ENCODE measurements at regions of chr19 and their contacts with region 1.

Region 1: GRCh38 chr19:41859618-41860418 is at the start of gene RPS19:
- DNase-seq: peak; percentile 95 to 99 (median 98)
- ATAC-seq: peak; percentile 85
- H3K4me3 ChIP-seq: peak within 1 kb of the TSS; percentile 74
- H3K4me3 Mint-ChIP-seq: peak within 1 kb of the TSS; percentile 87
- H3K27ac ChIP-seq: peak within 1 kb of the TSS; percentile 89 to 98
- H3K27ac Mint-ChIP-seq: peak within 1 kb of the TSS; percentile 86
- H3K4me1 ChIP-seq: peaks cover 49% of the 10 kb centered on the region
- H3K4me1 Mint-ChIP-seq: peaks cover 48% of the 10 kb centered on the region
- H3K27me3 ChIP-seq: no peaks in the 10 kb centered on the region
- H3K27me3 Mint-ChIP-seq: no peaks in the 10 kb centered on the region
- CTCF ChIP-seq: peak; percentile 84
- total RNA-seq, gene RPS19: 3,668 to 3,697 TPM

Region 2: GRCh38 chr19:41801792-41802211 is 58.0 kb before region 1 on chr19:
- CTCF ChIA-PET with region 1: no interaction called
- POLR2A ChIA-PET with region 1: no interaction called
- intact Hi-C with region 1: no loop called
- DNase-seq: peak in 2 of 14 experiments; percentile 36 to 43
- ATAC-seq: no peak
- H3K4me3 ChIP-seq: no peak overlapping the region
- H3K4me3 Mint-ChIP-seq: no peak overlapping the region
- H3K27ac ChIP-seq: no peak overlapping the region
- H3K27ac Mint-ChIP-seq: no peak overlapping the region
- H3K4me1 ChIP-seq: no peaks in the 10 kb centered on the region
- H3K4me1 Mint-ChIP-seq: peaks cover 16% of the 10 kb centered on the region
- H3K27me3 ChIP-seq: peaks cover 0 to 2% of the 10 kb centered on the region in 2 experiments
- H3K27me3 Mint-ChIP-seq: no peaks in the 10 kb centered on the region
- CTCF ChIP-seq: no peak

Region 3: DNA sequence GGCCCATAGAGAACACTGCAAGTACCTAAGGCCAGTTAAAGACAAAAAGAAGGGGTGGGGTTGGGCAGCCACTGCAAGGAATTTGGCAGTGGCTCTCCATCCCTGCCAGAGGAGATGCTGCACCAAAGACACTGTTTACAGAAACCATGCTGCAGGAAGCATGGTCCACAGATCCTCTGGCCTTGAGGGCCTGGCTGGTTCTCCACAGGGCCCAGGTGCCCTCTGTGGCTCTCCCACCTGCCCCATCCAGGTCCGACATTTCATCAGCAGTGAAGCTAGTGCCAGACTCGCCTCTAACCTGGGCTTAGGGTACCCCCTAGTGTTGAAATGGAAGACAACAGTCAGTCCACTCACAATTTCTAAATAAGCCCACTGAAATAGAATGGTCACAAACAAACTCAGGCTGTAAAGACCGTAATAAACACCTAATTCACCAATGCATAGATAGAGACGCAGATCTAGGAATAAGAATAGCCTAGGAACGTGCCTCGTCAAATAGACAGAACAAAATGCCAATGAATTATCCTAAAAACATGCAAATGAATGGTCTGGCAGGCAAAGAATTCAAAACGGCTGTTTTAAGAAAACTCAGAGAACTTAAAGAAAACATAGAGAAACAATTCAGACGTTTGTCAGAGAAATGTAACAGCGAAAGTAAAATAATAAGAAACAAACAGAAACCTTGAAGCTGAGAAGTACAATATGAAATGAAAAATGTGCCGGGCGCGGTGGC is 38.6 kb before region 1 on chr19:
- CTCF ChIA-PET with region 1: no interaction called
- POLR2A ChIA-PET with region 1: no interaction called
- intact Hi-C with region 1: no loop called
- DNase-seq: peak in 13 of 14 experiments; percentile 7 to 76 (median 21)
- ATAC-seq: peak; percentile 81
- H3K4me3 ChIP-seq: no peak overlapping the region
- H3K4me3 Mint-ChIP-seq: no peak overlapping the region
- H3K27ac ChIP-seq: no peak overlapping the region
- H3K27ac Mint-ChIP-seq: no peak overlapping the region
- H3K4me1 ChIP-seq: peaks cover 2% of the 10 kb centered on the region
- H3K4me1 Mint-ChIP-seq: no peaks in the 10 kb centered on the region
- H3K27me3 ChIP-seq: peaks cover 0 to 2% of the 10 kb centered on the region in 2 experiments
- H3K27me3 Mint-ChIP-seq: peaks cover 25% of the 10 kb centered on the region
- CTCF ChIP-seq: peak; percentile 66

Region 4: DNA sequence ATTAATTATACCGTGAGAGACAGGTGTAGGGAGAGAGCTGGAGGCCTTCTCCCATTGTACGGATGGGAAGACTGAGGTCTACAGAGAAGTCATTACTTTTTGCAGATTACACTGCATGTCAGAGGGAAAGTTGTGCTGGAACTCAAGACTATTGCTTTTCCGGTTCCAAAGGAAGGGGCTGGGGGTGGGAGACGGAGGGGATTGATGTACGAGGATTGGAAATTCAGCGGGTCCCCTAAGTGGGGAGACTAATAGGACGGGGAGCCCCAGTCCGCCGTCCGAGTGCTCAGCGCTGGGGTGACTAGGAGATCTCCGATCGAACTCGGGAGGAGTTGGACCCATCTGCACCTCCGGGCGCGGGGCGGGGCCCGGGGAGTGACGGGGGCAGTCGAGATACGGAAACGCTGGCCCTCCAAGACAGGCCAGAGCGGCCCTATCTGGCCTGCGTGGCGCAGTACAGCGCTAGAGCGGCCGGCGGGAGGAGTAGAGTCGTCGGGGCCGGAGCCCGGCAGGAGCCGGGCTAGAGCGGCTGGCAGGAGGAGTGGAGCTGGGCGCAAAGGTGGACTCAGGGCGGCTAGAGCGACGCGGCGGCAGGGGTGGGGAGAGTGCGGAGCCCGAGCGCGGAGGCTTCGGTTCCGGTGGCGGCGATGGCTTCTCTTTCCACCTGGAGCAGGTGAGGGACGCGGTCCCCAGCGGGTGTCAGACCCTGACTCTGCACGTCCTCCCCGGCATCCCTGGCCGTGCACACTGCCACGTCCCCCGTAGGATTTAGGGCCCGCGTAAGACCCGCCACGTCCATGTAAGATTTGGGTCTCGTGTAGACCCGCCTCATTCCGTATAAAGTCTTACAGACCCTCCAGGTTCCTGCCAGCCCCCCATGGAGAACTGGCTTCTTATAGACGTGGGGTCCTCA is 24.3 kb after region 1 on chr19:
- CTCF ChIA-PET with region 1: interaction called, 59 read pairs
- POLR2A ChIA-PET with region 1: interaction called, 184 read pairs
- intact Hi-C with region 1: loop called (anchors 1 kb)
- DNase-seq: peak; percentile 68 to 94 (median 87)
- ATAC-seq: peak; percentile 37
- H3K4me3 ChIP-seq: peak overlapping the region; percentile 94
- H3K4me3 Mint-ChIP-seq: peak overlapping the region; percentile 90
- H3K27ac ChIP-seq: peak overlapping the region; percentile 69 to 96
- H3K27ac Mint-ChIP-seq: peak overlapping the region; percentile 98
- H3K4me1 ChIP-seq: peaks cover 85% of the 10 kb centered on the region
- H3K4me1 Mint-ChIP-seq: peaks cover 78% of the 10 kb centered on the region
- H3K27me3 ChIP-seq: no peaks in the 10 kb centered on the region
- H3K27me3 Mint-ChIP-seq: no peaks in the 10 kb centered on the region
- CTCF ChIP-seq: no peak

Region 5: DNA sequence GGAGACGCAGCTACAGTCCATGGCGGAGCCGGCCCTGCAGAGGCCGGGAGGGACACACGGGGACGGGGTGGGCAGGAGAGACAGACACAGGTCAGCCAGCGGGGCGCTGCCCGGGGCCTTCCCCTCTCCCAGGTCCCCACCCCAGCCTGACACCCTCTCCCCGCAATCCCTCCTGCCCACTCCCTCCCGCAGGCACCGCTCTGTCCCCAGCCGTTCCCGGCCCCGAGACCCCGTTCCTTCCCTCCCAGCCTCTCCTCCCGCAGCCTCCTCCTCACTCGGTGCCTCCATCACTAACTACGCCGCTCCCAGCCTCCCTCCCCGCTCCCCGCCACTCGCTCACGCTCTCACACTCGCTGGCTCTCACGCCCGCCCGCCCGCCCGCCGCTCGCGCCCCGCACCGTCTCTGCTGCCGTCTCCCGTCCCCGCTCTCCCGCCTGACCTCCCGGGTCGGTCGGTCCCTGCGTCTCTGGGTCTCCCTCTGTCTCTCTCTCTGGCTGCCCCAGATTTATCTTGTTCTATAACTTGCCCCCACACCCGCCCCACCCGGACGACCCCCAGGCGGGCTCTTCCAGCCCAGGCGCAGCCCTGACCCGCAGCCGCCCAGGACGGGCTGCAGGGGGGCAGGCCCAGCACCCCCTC is 53.2 kb after region 1 on chr19:
- CTCF ChIA-PET with region 1: no interaction called
- POLR2A ChIA-PET with region 1: interaction called, 12 read pairs
- intact Hi-C with region 1: no loop called
- DNase-seq: peak in 3 of 14 experiments; percentile 50 to 58 (median 55)
- ATAC-seq: peak; percentile 35
- H3K4me3 ChIP-seq: no peak overlapping the region
- H3K4me3 Mint-ChIP-seq: no peak overlapping the region
- H3K27ac ChIP-seq: no peak overlapping the region
- H3K27ac Mint-ChIP-seq: peak overlapping the region; percentile 87
- H3K4me1 ChIP-seq: peaks cover 68% of the 10 kb centered on the region
- H3K4me1 Mint-ChIP-seq: peaks cover 37% of the 10 kb centered on the region
- H3K27me3 ChIP-seq: peaks cover 38 to 42% of the 10 kb centered on the region in 2 experiments
- H3K27me3 Mint-ChIP-seq: peaks cover 10% of the 10 kb centered on the region
- CTCF ChIP-seq: no peak

Region 6: DNA sequence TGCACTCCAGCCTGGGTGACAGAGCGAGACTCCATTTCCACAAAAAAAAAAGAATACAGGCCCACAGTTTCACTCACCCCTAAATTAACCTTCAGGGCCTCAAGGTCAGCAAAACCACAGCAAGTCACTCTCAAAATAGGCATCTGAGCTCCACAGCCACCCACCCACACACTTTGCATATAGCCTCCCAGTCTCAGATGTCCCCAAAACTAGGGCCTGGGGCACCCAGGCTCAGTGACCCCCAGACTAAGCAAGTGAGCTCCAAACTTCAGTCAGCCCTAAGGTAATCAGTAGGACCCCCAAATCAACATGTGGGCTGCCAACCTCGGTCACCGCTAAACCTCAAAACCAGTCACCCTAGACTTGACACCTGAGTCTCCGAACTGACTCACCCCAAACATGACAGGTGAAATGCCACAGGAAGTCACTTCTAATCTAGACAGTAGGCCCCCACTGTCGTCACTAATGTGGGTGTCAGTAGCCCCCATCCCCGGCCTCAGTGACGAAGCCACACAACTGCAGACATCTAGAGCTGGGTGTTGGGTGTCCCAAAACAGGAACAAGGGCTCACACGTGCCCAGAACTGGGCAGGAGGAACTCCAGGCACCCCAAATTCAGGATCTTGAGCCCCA is 85.4 kb after region 1 on chr19:
- CTCF ChIA-PET with region 1: interaction called, 20 read pairs
- POLR2A ChIA-PET with region 1: interaction called, 19 read pairs
- intact Hi-C with region 1: no loop called
- DNase-seq: peak; percentile 74 to 96 (median 84)
- ATAC-seq: peak; percentile 88
- H3K4me3 ChIP-seq: no peak overlapping the region
- H3K4me3 Mint-ChIP-seq: peak overlapping the region; percentile 76
- H3K27ac ChIP-seq: peak overlapping the region; percentile 60 to 67
- H3K27ac Mint-ChIP-seq: peak overlapping the region; percentile 98
- H3K4me1 ChIP-seq: peaks cover 46% of the 10 kb centered on the region
- H3K4me1 Mint-ChIP-seq: peaks cover 56% of the 10 kb centered on the region
- H3K27me3 ChIP-seq: peaks cover 0 to 3% of the 10 kb centered on the region in 2 experiments
- H3K27me3 Mint-ChIP-seq: no peaks in the 10 kb centered on the region
- CTCF ChIP-seq: no peak

Region 7: DNA sequence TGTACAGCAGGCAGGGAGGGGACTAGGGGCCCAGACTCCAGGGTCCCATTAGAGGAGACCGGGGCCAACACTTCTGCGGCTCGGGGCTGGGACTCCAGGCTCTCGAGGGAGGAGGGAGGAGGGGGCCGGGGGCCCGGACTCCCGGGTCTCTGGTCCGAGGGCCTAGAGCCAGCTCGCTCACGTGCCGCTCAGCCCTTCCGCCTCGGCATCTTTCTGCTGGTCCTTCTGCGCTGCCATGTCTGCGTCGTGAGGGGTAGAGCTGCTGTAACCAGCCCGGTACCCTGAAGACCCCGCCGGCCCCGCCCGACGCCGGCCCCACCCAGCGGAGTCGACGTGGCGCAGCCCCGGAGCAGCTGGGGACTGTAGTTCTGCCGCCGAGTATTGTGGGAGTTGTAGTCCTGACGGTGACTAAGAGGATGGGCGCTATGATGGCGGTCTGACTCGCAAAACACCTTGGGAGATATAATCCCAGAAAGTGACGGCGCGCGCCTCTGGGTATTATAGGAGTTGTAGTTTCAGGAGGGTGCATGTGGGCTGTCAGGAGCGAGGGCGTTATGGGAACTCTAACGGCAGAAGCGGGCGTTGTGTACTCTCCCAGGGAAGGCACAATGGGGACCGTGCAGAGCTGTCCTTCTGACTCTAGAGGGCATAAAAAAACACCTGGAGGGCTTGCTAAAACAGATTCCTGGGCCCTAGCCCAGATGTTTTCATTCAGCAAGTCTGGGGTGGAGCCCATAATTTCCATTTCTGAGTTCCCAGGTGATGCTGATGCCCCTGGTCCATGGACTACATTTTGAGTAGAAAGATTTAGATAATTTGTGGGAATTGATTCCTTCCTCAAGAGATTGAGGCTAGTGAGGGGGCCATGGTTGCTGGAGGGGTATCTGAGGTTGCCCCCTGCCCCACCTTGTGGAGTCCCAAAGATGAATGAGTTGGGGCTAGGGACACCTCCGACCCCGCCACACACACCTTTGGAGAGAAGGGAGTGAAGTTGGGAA is 99.5 kb after region 1 on chr19 and contains the start of gene RABAC1:
- CTCF ChIA-PET with region 1: interaction called, 30 read pairs
- POLR2A ChIA-PET with region 1: interaction called, 22 read pairs
- intact Hi-C with region 1: loop called (anchors 1 to 2 kb)
- DNase-seq: peak; percentile 76 to 93 (median 86)
- ATAC-seq: peak; percentile 85
- H3K4me3 ChIP-seq: peak within 1 kb of the TSS; percentile 93
- H3K4me3 Mint-ChIP-seq: peak within 1 kb of the TSS; percentile 91
- H3K27ac ChIP-seq: peak within 1 kb of the TSS; percentile 81 to 87
- H3K27ac Mint-ChIP-seq: peak within 1 kb of the TSS; percentile 78
- H3K4me1 ChIP-seq: peaks cover 24% of the 10 kb centered on the region
- H3K4me1 Mint-ChIP-seq: peaks cover 23% of the 10 kb centered on the region
- H3K27me3 ChIP-seq: no peaks in the 10 kb centered on the region
- H3K27me3 Mint-ChIP-seq: no peaks in the 10 kb centered on the region
- CTCF ChIP-seq: no peak
- total RNA-seq, gene RABAC1: 96.0 to 102 TPM

Region 8: GRCh38 chr19:42075616-42076379 is 216.0 kb after region 1 on chr19 and contains the start of gene ZNF574:
- CTCF ChIA-PET with region 1: no interaction called
- POLR2A ChIA-PET with region 1: interaction called, 5 read pairs
- intact Hi-C with region 1: loop called in 1 of 2 experiments (anchors 2 kb)
- DNase-seq: peak; percentile 95 to 100 (median 97)
- ATAC-seq: peak; percentile 96
- H3K4me3 ChIP-seq: peak within 1 kb of the TSS; percentile 63
- H3K4me3 Mint-ChIP-seq: peak within 1 kb of the TSS; percentile 97
- H3K27ac ChIP-seq: peak within 1 kb of the TSS; percentile 97 to 98
- H3K27ac Mint-ChIP-seq: peak within 1 kb of the TSS; percentile 99
- H3K4me1 ChIP-seq: peaks cover 29% of the 10 kb centered on the region
- H3K4me1 Mint-ChIP-seq: peaks cover 32% of the 10 kb centered on the region
- H3K27me3 ChIP-seq: no peaks in the 10 kb centered on the region
- H3K27me3 Mint-ChIP-seq: no peaks in the 10 kb centered on the region
- CTCF ChIP-seq: no peak
- total RNA-seq, gene ZNF574: 21.5 to 24.0 TPM

Region 9: DNA sequence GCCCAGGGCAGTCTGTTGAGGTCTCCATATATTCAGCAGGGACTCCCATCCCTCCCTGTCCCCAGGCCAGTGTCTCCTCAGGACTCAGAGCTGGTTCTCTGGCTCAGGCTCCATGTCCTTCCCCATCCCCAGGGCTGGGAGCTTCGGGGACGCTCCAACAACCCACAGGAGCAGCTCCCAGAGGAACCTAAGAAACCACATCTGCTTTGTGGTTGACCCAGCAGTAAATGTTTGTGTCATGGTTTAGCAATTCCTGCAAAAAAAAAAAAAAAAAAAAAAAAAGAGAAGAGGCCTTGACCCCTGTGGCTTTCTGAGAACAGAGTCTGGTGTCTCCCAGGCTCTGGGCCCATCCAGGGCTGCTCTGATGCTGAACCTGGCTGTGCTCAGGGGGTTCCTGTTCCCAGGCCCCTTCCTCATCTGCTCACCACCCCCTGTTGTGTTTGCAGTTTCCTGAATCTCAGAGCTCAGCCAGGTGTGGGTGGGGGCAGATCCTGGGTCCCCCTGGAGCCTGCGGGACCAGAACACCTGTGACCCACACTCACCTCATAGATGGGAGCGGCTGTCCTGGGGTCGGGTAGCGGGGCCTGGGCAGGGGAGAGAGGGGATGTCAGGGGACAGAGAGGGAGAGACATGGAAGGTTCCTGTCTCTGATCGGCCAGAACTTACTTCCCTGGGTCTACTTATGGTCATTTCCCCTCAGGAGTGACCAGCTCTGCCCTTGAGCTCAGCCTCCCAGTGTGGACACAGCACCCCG is 693.7 kb after region 1 on chr19:
- CTCF ChIA-PET with region 1: no interaction called
- POLR2A ChIA-PET with region 1: no interaction called
- intact Hi-C with region 1: no loop called
- DNase-seq: peak in 1 of 14 experiments; percentile 16
- ATAC-seq: no peak
- H3K4me3 ChIP-seq: no peak overlapping the region
- H3K4me3 Mint-ChIP-seq: no peak overlapping the region
- H3K27ac ChIP-seq: no peak overlapping the region
- H3K27ac Mint-ChIP-seq: no peak overlapping the region
- H3K4me1 ChIP-seq: no peaks in the 10 kb centered on the region
- H3K4me1 Mint-ChIP-seq: no peaks in the 10 kb centered on the region
- H3K27me3 ChIP-seq: peaks cover 5 to 6% of the 10 kb centered on the region in 2 experiments
- H3K27me3 Mint-ChIP-seq: peaks cover 47% of the 10 kb centered on the region
- CTCF ChIP-seq: no peak